ENCODE measurements at regions of chr1 and their contacts with region 1.

Region 1: GRCh38 chr1:117534995-117535467 is 70.8 kb upstream of the TENT5C start:
- DNase-seq: peak; percentile 24
- H3K4me3 Mint-ChIP-seq: no peak overlapping the region
- H3K27ac Mint-ChIP-seq: peak overlapping the region; percentile 26
- H3K4me1 Mint-ChIP-seq: peaks cover 16% of the 10 kb centered on the region
- H3K27me3 Mint-ChIP-seq: no peaks in the 10 kb centered on the region

Region 2: DNA sequence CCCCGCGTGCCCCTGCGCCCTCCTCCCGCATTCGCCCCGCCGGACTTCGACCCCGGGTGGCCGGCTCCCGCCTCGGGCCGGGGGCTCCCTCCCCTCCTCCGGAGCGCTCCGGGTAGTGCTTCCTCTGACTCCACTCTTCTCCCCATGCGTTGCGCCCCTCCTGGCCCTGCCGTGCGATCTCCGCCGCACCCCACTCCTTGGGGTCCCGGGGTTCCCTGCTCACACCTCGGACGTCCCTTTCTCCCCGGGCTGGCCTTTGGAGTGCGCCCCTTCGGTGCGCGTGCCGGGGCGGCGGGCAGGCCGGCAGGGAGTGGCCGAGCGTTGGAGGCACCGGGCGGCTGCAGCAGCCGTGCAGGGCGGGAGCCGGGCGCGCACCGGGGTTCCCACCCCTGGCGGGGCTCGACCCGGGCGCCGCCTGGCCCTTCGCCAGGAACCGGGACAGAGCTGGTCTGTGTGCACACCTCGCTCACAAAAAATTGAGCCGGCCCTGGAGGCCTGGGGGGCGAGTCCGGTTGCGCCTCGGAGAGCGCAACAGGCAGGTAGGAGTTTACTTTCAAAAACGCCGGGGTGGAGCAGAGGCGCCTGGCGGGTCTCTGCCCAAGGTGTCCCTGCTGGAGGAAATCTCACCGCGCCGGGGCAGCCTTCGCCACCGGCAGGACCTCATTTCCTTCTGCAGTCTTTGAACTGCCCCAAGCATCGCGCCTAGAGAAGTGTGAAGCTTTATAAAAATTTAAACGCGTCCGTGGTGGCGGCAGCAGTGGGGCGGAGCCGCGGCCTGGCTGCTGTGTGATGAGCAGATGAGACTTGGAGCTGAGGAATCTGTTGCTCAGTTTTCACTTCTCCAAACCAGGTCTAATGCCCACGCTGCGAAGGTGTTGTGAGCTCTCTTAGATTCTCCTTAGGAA is 1892.6 kb before region 1 on chr1:
- intact Hi-C with region 1: loop called (anchors 10 kb)
- DNase-seq: peak; percentile 27
- H3K4me3 Mint-ChIP-seq: peak overlapping the region; percentile 87
- H3K27ac Mint-ChIP-seq: peak overlapping the region; percentile 48
- H3K4me1 Mint-ChIP-seq: peaks cover 16% of the 10 kb centered on the region
- H3K27me3 Mint-ChIP-seq: peaks cover 23% of the 10 kb centered on the region

Region 3: GRCh38 chr1:117367047-117368018 is 167.7 kb before region 1 on chr1 and contains the start of gene MAN1A2:
- intact Hi-C with region 1: loop called (anchors 5 kb)
- DNase-seq: peak; percentile 74
- H3K4me3 Mint-ChIP-seq: peak within 1 kb of the TSS; percentile 97
- H3K27ac Mint-ChIP-seq: peak within 1 kb of the TSS; percentile 88
- H3K4me1 Mint-ChIP-seq: peaks cover 60% of the 10 kb centered on the region
- H3K27me3 Mint-ChIP-seq: no peaks in the 10 kb centered on the region
- total RNA-seq, gene MAN1A2: 30.1 and 32.5 TPM in 2 replicates

Region 4: DNA sequence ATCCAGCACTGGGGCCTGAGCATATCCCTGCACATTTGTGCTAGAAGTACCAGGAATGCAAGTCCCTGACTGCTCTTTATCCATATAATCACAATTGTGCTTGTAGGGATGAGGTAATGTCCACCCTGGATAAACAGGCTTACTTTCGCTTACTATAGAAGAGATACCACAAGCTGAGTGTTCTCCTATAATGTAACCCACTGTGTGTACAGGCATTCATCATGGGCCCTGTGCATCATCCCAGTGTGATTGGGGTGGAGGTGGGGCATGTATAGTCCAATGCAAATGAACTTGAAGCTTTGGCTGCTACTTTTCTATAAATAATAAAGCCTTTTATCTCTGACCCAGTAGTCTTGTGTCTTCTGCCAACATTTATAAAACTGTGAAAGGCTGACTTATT is 98.5 kb before region 1 on chr1:
- intact Hi-C with region 1: no loop called
- DNase-seq: no peak
- H3K4me3 Mint-ChIP-seq: no peak overlapping the region
- H3K27ac Mint-ChIP-seq: no peak overlapping the region
- H3K4me1 Mint-ChIP-seq: no peaks in the 10 kb centered on the region
- H3K27me3 Mint-ChIP-seq: no peaks in the 10 kb centered on the region

Region 5: GRCh38 chr1:117605774-117606648 is 71.0 kb after region 1 on chr1 and contains the start of gene TENT5C:
- intact Hi-C with region 1: loop called (anchors 1 kb)
- DNase-seq: peak; percentile 98
- H3K4me3 Mint-ChIP-seq: peak within 1 kb of the TSS; percentile 91
- H3K27ac Mint-ChIP-seq: peak within 1 kb of the TSS; percentile 80
- H3K4me1 Mint-ChIP-seq: peaks cover 56% of the 10 kb centered on the region
- H3K27me3 Mint-ChIP-seq: peaks cover 26% of the 10 kb centered on the region
- total RNA-seq, gene TENT5C: 4.9 and 5.2 TPM in 2 replicates

Region 6: GRCh38 chr1:117664314-117664713 is 129.3 kb after region 1 on chr1:
- intact Hi-C with region 1: loop called (anchors 1 kb)
- DNase-seq: peak; percentile 73
- H3K4me3 Mint-ChIP-seq: peak overlapping the region; percentile 57
- H3K27ac Mint-ChIP-seq: peak overlapping the region; percentile 84
- H3K4me1 Mint-ChIP-seq: peaks cover 88% of the 10 kb centered on the region
- H3K27me3 Mint-ChIP-seq: peaks cover 6% of the 10 kb centered on the region

Region 7: DNA sequence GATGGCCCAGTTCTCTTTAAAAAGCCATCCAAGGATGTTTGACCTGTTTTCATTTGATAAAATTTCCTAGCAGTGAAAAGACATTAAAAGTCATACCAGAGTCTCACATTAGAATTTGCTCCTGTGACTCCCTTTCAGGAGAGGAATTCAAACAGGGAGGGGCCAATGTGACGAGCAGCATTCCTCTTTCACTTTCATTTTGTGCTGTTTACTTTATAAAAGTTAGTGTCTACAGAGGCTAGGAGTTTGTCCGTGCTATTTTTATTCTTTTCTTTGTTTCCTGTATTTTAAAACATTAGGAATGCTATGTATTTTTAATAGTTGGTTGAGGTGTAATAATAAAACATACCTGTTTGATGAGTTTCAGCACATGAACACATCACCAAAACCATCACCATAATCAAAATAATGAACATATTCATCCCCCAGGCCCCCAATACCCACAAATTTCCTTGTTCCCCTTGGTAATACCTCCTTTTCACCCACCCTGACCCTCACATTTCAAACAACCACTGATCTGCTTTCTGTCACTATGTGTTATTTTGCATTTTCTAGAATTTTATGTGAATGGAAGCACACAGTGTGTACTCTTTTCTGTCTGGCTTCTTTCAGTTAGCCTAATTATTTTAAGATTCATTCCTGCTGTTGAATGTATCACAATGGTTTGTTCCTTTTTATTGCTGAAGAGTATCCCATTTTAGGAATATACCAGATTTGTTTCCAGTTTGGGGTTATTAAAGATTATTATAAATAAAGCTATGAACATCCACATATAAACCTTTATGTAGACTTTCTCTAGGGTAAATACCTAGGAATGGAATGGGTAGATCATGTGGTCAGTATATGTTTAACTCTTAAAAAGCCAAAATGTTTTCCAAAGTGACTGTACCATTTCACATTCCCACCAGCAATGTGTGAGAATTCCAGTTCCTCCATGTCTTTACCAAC is 200.3 kb after region 1 on chr1:
- intact Hi-C with region 1: loop called (anchors 1 kb)
- DNase-seq: peak; percentile 35
- H3K4me3 Mint-ChIP-seq: peak overlapping the region; percentile 65
- H3K27ac Mint-ChIP-seq: peak overlapping the region; percentile 60
- H3K4me1 Mint-ChIP-seq: peaks cover 14% of the 10 kb centered on the region
- H3K27me3 Mint-ChIP-seq: peaks cover 12% of the 10 kb centered on the region

Region 8: GRCh38 chr1:117871013-117871412 is 336.0 kb after region 1 on chr1:
- intact Hi-C with region 1: no loop called
- DNase-seq: no peak
- H3K4me3 Mint-ChIP-seq: no peak overlapping the region
- H3K27ac Mint-ChIP-seq: no peak overlapping the region
- H3K4me1 Mint-ChIP-seq: no peaks in the 10 kb centered on the region
- H3K27me3 Mint-ChIP-seq: no peaks in the 10 kb centered on the region

Region 9: GRCh38 chr1:117895482-117896114 is 360.6 kb after region 1 on chr1:
- intact Hi-C with region 1: loop called (anchors 1 kb)
- DNase-seq: peak; percentile 32
- H3K4me3 Mint-ChIP-seq: no peak overlapping the region
- H3K27ac Mint-ChIP-seq: no peak overlapping the region
- H3K4me1 Mint-ChIP-seq: peaks cover 7% of the 10 kb centered on the region
- H3K27me3 Mint-ChIP-seq: no peaks in the 10 kb centered on the region

Measured in activated T-helper 1 cell treated with anti-CD3 and anti-CD28 coated beads, Interleukin-12 subunit alpha, Interleukin-12 subunit beta, Interleukin-2, Interleukin-4 antibody, amounts not matched to agents 30 ng/mL and 10 ng/mL and 1 ng/mL, durations not matched to agents 14 hours and 24 hours and 36 hours (primary cell).